CD14-positive monocyte (primary cell): ENCODE measurements at regions of chrX and their contacts with region 1.

Region 1: GRCh38 chrX:130401415-130402207 is at the start of gene RBMX2:
- DNase-seq: peak; percentile 72 to 85 (median 80)
- H3K4me3 ChIP-seq: peak within 1 kb of the TSS; percentile 76 to 94 (median 90)
- H3K4me3 Mint-ChIP-seq: peak within 1 kb of the TSS; percentile 79 to 97
- H3K27ac ChIP-seq: peak within 1 kb of the TSS; percentile 42 to 81
- H3K27ac Mint-ChIP-seq: peak within 1 kb of the TSS; percentile 81 to 93 (median 86)
- H3K4me1 ChIP-seq: peaks cover 9 to 13% of the 10 kb centered on the region in 2 donors
- H3K4me1 Mint-ChIP-seq: peaks cover 10% of the 10 kb centered on the region
- H3K27me3 ChIP-seq: peaks cover 4 to 17% of the 10 kb centered on the region in 2 donors
- H3K27me3 Mint-ChIP-seq: peaks cover 5 to 9% (median 6%) of the 10 kb centered on the region in 3 donors
- CTCF ChIP-seq: no peak
- polyA plus RNA-seq, gene RBMX2: 11.9 to 15.0 (median 13.1) TPM

Region 2: GRCh38 chrX:130330706-130331105 is 70.9 kb before region 1 on chrX:
- intact Hi-C with region 1: no loop called
- DNase-seq: peak in 2 of 3 donors; percentile 0 to 3
- H3K4me3 ChIP-seq: no peak overlapping the region
- H3K4me3 Mint-ChIP-seq: no peak overlapping the region
- H3K27ac ChIP-seq: no peak overlapping the region
- H3K27ac Mint-ChIP-seq: no peak overlapping the region
- H3K4me1 ChIP-seq: no peaks in the 10 kb centered on the region
- H3K4me1 Mint-ChIP-seq: no peaks in the 10 kb centered on the region
- H3K27me3 ChIP-seq: peaks cover 2% of the 10 kb centered on the region in 2 donors
- H3K27me3 Mint-ChIP-seq: peaks cover 9 to 19% (median 12%) of the 10 kb centered on the region in 3 donors
- CTCF ChIP-seq: no peak

Region 3: DNA sequence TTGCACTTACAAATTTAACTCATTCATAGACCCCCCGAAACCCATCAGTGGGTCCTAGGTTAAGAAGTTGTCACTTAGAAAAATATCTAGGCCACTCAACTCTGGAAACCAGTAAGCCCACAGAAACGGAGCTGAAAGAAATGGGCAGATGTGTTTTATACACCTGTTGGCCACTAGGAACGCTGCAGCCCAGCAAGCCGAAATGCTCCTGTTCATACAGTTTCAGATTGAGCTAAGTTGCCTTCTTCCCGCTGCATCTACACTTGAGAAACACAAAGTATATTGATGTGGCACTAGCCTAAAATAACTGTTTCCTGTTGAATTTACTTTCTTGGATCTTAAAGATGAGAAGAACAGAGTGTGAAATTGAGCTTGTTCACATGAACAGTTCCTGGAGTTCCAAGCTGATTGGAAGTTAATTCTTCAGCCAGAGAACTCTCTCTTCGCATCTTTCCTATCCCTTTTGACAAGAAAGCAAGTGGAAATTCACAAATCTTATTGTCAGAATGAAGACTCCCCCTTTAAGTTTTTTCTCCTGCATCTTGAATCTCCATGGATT is 174.3 kb after region 1 on chrX:
- intact Hi-C with region 1: no loop called
- DNase-seq: no peak
- H3K4me3 ChIP-seq: no peak overlapping the region
- H3K4me3 Mint-ChIP-seq: no peak overlapping the region
- H3K27ac ChIP-seq: no peak overlapping the region
- H3K27ac Mint-ChIP-seq: no peak overlapping the region
- H3K4me1 ChIP-seq: no peaks in the 10 kb centered on the region
- H3K4me1 Mint-ChIP-seq: no peaks in the 10 kb centered on the region
- H3K27me3 ChIP-seq: no peaks in the 10 kb centered on the region
- H3K27me3 Mint-ChIP-seq: peaks cover 0 to 2% (median 1%) of the 10 kb centered on the region in 3 donors
- CTCF ChIP-seq: peak; percentile 66

Region 4: DNA sequence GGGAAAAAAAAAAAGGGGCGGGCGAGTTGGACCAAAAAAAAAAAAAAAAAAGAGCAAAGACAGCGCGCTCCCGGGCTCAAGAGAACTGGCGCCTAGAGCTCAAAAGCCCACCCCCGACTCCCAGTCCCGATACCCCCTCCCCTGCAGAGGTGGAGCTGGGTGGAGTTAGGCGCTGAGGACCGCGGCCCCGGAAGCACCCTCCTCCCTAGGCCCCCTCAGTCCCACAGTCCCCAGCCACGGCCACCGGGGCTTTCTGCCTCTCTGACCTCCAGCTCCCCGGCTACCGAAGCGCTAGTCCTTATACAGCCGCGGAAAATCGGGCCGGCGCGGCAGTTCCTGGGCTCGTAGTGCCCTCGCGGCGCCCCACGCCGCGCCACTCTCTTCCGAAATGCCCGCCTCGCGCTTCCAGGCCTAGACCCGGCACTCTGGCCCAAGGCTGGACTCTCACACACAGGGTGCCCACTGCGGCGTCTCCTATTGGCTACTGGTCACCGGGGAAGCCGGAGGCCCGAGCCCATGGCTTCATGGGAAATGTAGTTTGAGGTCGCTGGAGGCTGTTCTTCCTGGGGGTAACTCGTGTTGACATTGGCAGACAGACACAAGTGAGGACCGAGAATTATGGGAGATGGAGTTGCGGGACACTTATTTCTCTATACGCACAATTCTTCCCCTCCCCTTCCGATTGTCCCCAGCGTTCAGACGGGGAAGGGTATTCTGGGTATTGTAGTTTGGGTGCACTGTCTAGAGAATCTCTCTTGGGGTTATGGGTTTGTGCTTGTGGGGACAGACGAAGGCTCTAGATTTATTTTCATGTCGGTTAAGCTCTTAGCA is 501.4 kb after region 1 on chrX and contains the start of gene ENOX2:
- intact Hi-C with region 1: loop called in 1 of 2 experiments (anchors 10 kb)
- DNase-seq: peak; percentile 90 to 92 (median 91)
- H3K4me3 ChIP-seq: peak within 1 kb of the TSS; percentile 47 to 85 (median 80)
- H3K4me3 Mint-ChIP-seq: no peak within 1 kb of the TSS
- H3K27ac ChIP-seq: peak within 1 kb of the TSS; percentile 70 to 85
- H3K27ac Mint-ChIP-seq: peak within 1 kb of the TSS in 1 of 7 donors; percentile 60
- H3K4me1 ChIP-seq: peaks cover 6 to 12% of the 10 kb centered on the region in 2 donors
- H3K4me1 Mint-ChIP-seq: peaks cover 10% of the 10 kb centered on the region
- H3K27me3 ChIP-seq: peaks cover 0 to 2% of the 10 kb centered on the region in 2 donors
- H3K27me3 Mint-ChIP-seq: peaks cover 0 to 5% (median 1%) of the 10 kb centered on the region in 3 donors
- CTCF ChIP-seq: no peak
- polyA plus RNA-seq, gene ENOX2: 6.8 to 22.1 (median 14.7) TPM